Activated CD4-positive, alpha-beta memory T cell treated with anti-CD3 and anti-CD28 coated beads for 36 hours (primary cell): ENCODE measurements at regions of chr7 and their contacts with region 1.

Region 1: GRCh38 chr7:100852048-100852872 is at the start of gene SLC12A9:
- DNase-seq: peak; percentile 92
- H3K4me3 Mint-ChIP-seq: peak within 1 kb of the TSS; percentile 92
- H3K27ac Mint-ChIP-seq: peak within 1 kb of the TSS; percentile 81
- H3K4me1 Mint-ChIP-seq: peaks cover 13% of the 10 kb centered on the region
- H3K27me3 Mint-ChIP-seq: no peaks in the 10 kb centered on the region
- total RNA-seq, gene SLC12A9: 17.8 to 18.5 TPM

Region 2: DNA sequence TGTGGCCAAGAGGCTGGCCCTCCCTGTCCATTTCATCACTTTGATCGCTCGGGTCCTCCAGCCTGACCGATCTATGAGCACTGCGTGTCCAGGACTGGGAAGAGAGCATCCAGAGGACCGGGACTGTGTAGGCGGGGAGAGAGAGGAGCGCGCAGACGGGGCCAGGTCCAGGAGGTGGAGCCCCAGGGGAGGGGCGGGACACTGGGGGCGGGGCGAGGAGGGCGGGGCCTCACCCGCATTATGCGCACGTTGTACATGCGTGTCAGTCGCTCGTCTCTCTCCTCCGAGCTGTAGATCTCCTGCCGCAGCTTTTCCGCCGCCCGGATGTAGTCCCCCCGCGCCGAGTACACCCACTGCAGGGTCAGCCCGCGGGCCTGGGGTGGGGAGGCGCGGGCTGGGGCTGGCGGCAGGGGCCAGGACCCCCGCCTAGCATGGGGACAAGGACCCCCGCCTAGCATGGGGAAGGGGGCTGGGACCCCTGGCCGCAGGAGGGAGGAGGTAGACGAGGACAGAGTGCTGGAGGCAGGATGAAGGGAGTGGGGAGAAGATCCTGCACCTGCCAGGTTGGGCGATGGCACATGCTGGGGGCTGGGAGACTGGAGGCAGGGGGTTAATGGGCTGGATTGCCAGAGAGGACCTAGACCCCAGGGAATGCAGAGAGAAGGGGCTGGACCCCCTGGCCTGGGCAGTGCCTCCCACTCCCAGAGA is 225.6 kb before region 1 on chr7:
- CTCF ChIA-PET with region 1: interaction called, 8 read pairs
- POLR2A ChIA-PET with region 1: no interaction called
- intact Hi-C with region 1: loop called (anchors 10 kb)
- DNase-seq: peak; percentile 96
- H3K4me3 Mint-ChIP-seq: peak overlapping the region; percentile 65
- H3K27ac Mint-ChIP-seq: peak overlapping the region; percentile 38
- H3K4me1 Mint-ChIP-seq: peaks cover 12% of the 10 kb centered on the region
- H3K27me3 Mint-ChIP-seq: no peaks in the 10 kb centered on the region

Region 3: GRCh38 chr7:100803398-100804233 is 48.6 kb before region 1 on chr7:
- CTCF ChIA-PET with region 1: interaction called, 177 read pairs
- POLR2A ChIA-PET with region 1: interaction called, 4 read pairs
- intact Hi-C with region 1: loop called (anchors 1 kb)
- DNase-seq: peak; percentile 67
- H3K4me3 Mint-ChIP-seq: no peak overlapping the region
- H3K27ac Mint-ChIP-seq: no peak overlapping the region
- H3K4me1 Mint-ChIP-seq: peaks cover 2% of the 10 kb centered on the region
- H3K27me3 Mint-ChIP-seq: peaks cover 3% of the 10 kb centered on the region

Region 4: DNA sequence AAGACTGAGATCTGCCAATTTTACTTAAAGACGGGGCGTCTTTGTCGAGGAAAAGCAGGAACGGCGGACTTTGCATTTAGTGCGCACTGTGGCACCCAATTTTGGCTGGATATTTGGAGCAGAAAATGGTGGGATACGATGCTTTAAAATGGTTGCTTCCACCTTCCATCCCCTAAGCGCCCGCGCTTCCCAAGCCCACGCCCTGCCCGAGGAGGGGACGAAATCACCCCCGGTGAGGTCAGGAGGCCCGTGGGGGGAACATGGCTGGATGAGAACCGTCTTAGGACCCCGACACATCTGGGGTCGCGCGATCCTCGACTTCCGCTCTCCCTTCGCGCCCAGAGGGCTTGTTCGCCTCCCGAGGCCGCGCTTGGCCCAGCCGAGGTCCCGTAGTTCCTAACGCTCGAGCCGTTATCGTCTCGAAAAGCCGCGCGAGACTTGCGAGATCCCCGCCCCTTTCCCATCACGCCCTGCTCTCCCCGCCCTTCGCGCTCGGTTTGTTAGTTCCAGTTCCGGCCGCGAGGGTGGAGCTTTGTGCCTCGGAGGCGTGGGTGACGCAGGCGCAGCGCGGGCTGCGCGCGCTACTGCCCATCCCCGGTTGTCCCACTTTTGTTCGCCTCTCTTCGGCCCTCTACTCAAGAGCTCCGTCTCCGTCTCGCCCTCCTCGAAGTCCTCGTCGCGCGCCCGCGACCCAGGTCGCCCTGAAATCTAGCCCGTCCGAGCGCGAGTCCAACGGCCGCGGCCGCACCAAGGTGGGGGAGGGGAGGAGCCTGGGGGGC is 22.5 kb after region 1 on chr7 and contains the start of gene SRRT:
- CTCF ChIA-PET with region 1: interaction called, 17 read pairs
- POLR2A ChIA-PET with region 1: interaction called, 14 read pairs
- intact Hi-C with region 1: loop called (anchors 2 kb)
- DNase-seq: peak; percentile 99
- H3K4me3 Mint-ChIP-seq: peak within 1 kb of the TSS; percentile 99
- H3K27ac Mint-ChIP-seq: peak within 1 kb of the TSS; percentile 100
- H3K4me1 Mint-ChIP-seq: peaks cover 43% of the 10 kb centered on the region
- H3K27me3 Mint-ChIP-seq: no peaks in the 10 kb centered on the region
- total RNA-seq, gene SRRT: 209 to 223 TPM

Region 5: GRCh38 chr7:101015626-101016025 is 163.4 kb after region 1 on chr7:
- CTCF ChIA-PET with region 1: no interaction called
- POLR2A ChIA-PET with region 1: no interaction called
- intact Hi-C with region 1: no loop called
- DNase-seq: no peak
- H3K4me3 Mint-ChIP-seq: no peak overlapping the region
- H3K27ac Mint-ChIP-seq: no peak overlapping the region
- H3K4me1 Mint-ChIP-seq: peaks cover 19% of the 10 kb centered on the region
- H3K27me3 Mint-ChIP-seq: no peaks in the 10 kb centered on the region

Region 6: GRCh38 chr7:101125989-101126650 is 273.9 kb after region 1 on chr7:
- CTCF ChIA-PET with region 1: no interaction called
- POLR2A ChIA-PET with region 1: no interaction called
- intact Hi-C with region 1: no loop called
- DNase-seq: no peak
- H3K4me3 Mint-ChIP-seq: no peak overlapping the region
- H3K27ac Mint-ChIP-seq: peak overlapping the region; percentile 13
- H3K4me1 Mint-ChIP-seq: peaks cover 35% of the 10 kb centered on the region
- H3K27me3 Mint-ChIP-seq: peaks cover 48% of the 10 kb centered on the region